Breast epithelium (tissue), 4 donors: ENCODE measurements at regions of chr1 and their contacts with region 1.

Region 1: GRCh38 chr1:156445789-156446263 is 54.7 kb downstream of the MEF2D start:
- DNase-seq: peak; percentile 71 to 83
- H3K4me3 ChIP-seq: peak overlapping the region in 1 of 3 donors; percentile 21
- H3K27ac ChIP-seq: no peak overlapping the region
- H3K4me1 ChIP-seq: no peaks in the 10 kb centered on the region
- H3K27me3 ChIP-seq: peaks cover 0 to 31% of the 10 kb centered on the region in 2 donors
- CTCF ChIP-seq: peak; percentile 93 to 95 (median 95)
- POLR2A ChIP-seq: no peak

Region 2: GRCh38 chr1:156383023-156383422 is 62.8 kb before region 1 on chr1:
- intact Hi-C with region 1: loop called (anchors 10 kb)
- DNase-seq: peak in 1 of 2 donors; percentile 59
- H3K4me3 ChIP-seq: no peak overlapping the region
- H3K27ac ChIP-seq: no peak overlapping the region
- H3K4me1 ChIP-seq: no peaks in the 10 kb centered on the region
- H3K27me3 ChIP-seq: peaks cover 0 to 11% of the 10 kb centered on the region in 2 donors
- CTCF ChIP-seq: peak; percentile 33 to 70 (median 64)
- POLR2A ChIP-seq: no peak